IMR-90 (cell line): ENCODE measurements at regions of chr9 and their contacts with region 1.

Region 1: GRCh38 chr9:18442629-18443491 is 31.1 kb upstream of the ADAMTSL1 start:
- DNase-seq: peak; percentile 87
- ATAC-seq: peak; percentile 71
- H3K4me3 ChIP-seq: no peak overlapping the region
- H3K27ac ChIP-seq: no peak overlapping the region
- H3K4me1 ChIP-seq: peaks cover 10% of the 10 kb centered on the region
- H3K27me3 ChIP-seq: no peaks in the 10 kb centered on the region
- CTCF ChIP-seq: peak; percentile 92
- POLR2A ChIP-seq: no peak
- RAD21 ChIP-seq: peak; percentile 79

Region 2: DNA sequence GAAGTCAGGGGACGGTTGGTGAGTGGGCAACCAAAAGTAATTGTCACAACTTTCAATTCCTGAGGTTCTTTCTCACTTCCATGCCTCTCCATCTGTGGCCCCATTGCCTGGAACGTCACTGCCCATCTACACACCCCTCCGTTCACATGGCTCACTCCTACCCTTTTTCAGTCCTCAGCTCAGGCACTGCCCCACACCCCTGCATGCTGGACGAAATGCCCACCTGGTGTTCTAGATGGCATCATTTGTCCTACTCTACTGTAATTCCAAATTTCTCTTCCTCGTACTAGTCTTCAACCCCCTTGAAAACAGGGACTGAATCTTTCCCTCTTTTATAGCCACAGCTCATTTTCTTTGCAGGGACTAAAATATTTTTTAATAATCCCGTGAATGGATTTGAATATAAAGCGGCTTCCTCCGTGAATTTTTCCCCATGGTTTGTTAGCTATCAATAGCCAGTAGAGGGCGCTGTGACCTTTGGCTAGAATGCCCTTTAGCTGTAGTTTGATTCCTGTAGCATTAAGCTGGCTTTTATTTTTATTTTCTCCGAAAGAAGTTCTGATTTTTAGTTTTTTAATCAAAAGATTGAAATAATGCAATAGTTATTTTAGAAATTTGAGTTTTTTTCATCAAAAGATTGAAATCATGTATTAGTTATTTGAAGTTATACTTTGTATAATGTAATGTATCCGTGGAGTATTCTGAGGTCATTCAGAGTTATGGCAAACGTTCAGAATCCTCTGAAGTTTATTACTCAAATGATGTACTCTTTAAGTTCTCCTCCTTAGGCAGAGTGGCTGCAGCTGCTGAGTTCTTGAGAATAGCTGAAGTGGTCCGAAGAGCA is 631.9 kb before region 1 on chr9:
- CTCF ChIA-PET with region 1: no interaction called
- POLR2A ChIA-PET with region 1: no interaction called
- dilution Hi-C with region 1: no loop called
- in situ Hi-C with region 1: loop called (anchors 25 kb)
- intact Hi-C with region 1: no loop called
- DNase-seq: peak; percentile 66
- ATAC-seq: peak; percentile 87
- H3K4me3 ChIP-seq: no peak overlapping the region
- H3K27ac ChIP-seq: no peak overlapping the region
- H3K4me1 ChIP-seq: no peaks in the 10 kb centered on the region
- H3K27me3 ChIP-seq: peaks cover 3% of the 10 kb centered on the region
- CTCF ChIP-seq: peak; percentile 91
- POLR2A ChIP-seq: no peak
- RAD21 ChIP-seq: peak; percentile 91

Region 3: DNA sequence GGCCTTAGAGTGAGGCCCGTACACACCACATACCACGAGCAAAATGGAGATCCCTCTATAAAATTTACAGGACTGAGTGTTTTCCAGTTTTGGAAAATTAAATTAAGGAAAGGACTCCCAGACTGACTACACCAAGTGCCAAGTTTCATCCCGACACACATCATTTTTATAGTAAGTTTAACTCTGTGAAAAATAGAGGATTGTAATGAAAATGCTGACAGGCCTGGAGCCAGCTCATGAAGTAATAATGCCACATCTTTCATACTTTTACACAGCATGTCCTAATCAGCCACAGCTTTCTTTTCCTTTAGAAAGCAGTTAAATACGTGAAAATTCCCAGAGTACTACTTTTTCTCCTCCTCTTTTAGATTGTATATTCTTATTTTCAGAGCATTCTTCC is 420.9 kb after region 1 on chr9:
- CTCF ChIA-PET with region 1: interaction called, 10 read pairs
- POLR2A ChIA-PET with region 1: no interaction called
- dilution Hi-C with region 1: no loop called
- in situ Hi-C with region 1: no loop called
- intact Hi-C with region 1: no loop called
- DNase-seq: no peak
- ATAC-seq: no peak
- H3K4me3 ChIP-seq: no peak overlapping the region
- H3K27ac ChIP-seq: no peak overlapping the region
- H3K4me1 ChIP-seq: peaks cover 2% of the 10 kb centered on the region; the same call in 1 of the 2 replicates
- H3K27me3 ChIP-seq: no peaks in the 10 kb centered on the region
- CTCF ChIP-seq: no peak
- POLR2A ChIP-seq: no peak
- RAD21 ChIP-seq: no peak

Region 4: DNA sequence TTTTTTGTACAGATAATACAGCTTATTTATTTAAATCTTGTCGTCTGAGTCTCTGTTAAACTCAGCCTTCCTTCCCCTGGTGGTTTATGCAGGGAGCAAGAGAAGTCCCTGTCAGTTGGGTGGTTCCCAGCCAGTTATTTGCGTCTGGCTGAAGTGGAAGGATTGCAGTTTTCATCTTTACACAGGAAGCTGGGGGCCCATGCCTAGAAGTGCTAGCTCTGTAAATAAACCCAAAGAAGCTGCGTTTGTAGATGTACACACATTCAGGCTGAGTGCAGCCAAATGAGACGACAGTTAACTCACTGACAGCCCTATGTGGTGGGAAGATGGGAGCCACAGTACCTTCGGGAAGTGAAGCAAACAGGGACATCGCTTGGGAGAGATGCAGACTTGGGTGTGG is 468.1 kb after region 1 on chr9:
- CTCF ChIA-PET with region 1: no interaction called
- POLR2A ChIA-PET with region 1: no interaction called
- dilution Hi-C with region 1: no loop called
- in situ Hi-C with region 1: no loop called
- intact Hi-C with region 1: loop called (anchors 5 kb)
- DNase-seq: peak; percentile 53
- ATAC-seq: peak; percentile 72
- H3K4me3 ChIP-seq: no peak overlapping the region
- H3K27ac ChIP-seq: peak overlapping the region; percentile 1; the same call in 1 of the 2 replicates
- H3K4me1 ChIP-seq: peaks cover 15% of the 10 kb centered on the region
- H3K27me3 ChIP-seq: peaks cover 6% of the 10 kb centered on the region
- CTCF ChIP-seq: 0 out of 2 replicates have a peak, but pooled peaks have one; percentile 1
- POLR2A ChIP-seq: no peak
- RAD21 ChIP-seq: no peak

Region 5: GRCh38 chr9:19018201-19018600 is 575.3 kb after region 1 on chr9:
- CTCF ChIA-PET with region 1: interaction called, 6 read pairs
- POLR2A ChIA-PET with region 1: no interaction called
- dilution Hi-C with region 1: no loop called
- in situ Hi-C with region 1: no loop called
- intact Hi-C with region 1: loop called (anchors 2 kb)
- DNase-seq: no peak
- ATAC-seq: no peak
- H3K4me3 ChIP-seq: no peak overlapping the region
- H3K27ac ChIP-seq: no peak overlapping the region
- H3K4me1 ChIP-seq: no peaks in the 10 kb centered on the region
- H3K27me3 ChIP-seq: peaks cover 9% of the 10 kb centered on the region
- CTCF ChIP-seq: no peak
- POLR2A ChIP-seq: no peak
- RAD21 ChIP-seq: no peak